ENCODE measurements at regions of chr4 and their contacts with region 1.

Region 1: GRCh38 chr4:99847362-99847976 is 30.8 kb downstream of the DAPP1 start:
- DNase-seq: no peak
- H3K4me3 Mint-ChIP-seq: peak overlapping the region; percentile 59
- H3K27ac Mint-ChIP-seq: peak overlapping the region; percentile 95
- H3K4me1 Mint-ChIP-seq: peaks cover 83% of the 10 kb centered on the region
- H3K27me3 Mint-ChIP-seq: no peaks in the 10 kb centered on the region

Region 2: DNA sequence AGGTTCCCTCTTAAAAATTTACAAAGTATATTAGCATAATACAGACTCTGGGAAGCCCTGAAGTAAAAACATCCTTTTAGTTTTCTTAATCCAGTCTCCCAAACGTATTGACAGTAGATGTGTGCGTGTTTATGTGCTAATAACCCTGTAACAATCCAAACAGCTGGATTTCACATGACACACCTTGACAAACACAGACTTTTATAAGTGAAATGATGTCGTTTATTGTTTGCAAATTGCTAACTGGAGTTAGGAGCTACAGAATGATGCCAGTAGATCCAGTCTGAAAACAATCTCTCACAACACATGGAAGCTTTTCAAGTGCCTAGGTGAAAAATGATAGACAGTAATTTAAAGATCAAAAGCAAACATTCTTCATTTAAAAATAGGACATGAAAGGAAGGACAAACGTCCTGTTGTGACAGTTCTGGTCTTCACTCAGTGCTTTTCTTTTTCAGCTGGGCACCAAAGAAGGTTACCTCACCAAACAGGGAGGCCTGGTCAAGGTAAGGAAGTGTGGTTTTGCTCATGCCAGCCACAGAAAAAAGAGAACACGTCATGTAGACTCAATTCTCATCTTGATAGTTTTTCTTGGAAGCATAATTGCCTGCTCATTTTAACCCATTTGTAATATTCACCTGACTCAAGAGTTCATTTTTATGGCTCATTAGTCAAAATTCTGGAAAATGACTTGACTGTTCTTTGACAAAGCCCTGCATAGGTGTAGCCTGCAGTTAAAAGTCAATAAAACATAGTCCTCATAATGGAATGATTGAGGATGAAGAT is 13.8 kb after region 1 on chr4:
- intact Hi-C with region 1: loop called (anchors 1 kb)
- DNase-seq: no peak
- H3K4me3 Mint-ChIP-seq: peak overlapping the region; percentile 2
- H3K27ac Mint-ChIP-seq: peak overlapping the region; percentile 75
- H3K4me1 Mint-ChIP-seq: peaks cover 59% of the 10 kb centered on the region
- H3K27me3 Mint-ChIP-seq: no peaks in the 10 kb centered on the region

Region 3: DNA sequence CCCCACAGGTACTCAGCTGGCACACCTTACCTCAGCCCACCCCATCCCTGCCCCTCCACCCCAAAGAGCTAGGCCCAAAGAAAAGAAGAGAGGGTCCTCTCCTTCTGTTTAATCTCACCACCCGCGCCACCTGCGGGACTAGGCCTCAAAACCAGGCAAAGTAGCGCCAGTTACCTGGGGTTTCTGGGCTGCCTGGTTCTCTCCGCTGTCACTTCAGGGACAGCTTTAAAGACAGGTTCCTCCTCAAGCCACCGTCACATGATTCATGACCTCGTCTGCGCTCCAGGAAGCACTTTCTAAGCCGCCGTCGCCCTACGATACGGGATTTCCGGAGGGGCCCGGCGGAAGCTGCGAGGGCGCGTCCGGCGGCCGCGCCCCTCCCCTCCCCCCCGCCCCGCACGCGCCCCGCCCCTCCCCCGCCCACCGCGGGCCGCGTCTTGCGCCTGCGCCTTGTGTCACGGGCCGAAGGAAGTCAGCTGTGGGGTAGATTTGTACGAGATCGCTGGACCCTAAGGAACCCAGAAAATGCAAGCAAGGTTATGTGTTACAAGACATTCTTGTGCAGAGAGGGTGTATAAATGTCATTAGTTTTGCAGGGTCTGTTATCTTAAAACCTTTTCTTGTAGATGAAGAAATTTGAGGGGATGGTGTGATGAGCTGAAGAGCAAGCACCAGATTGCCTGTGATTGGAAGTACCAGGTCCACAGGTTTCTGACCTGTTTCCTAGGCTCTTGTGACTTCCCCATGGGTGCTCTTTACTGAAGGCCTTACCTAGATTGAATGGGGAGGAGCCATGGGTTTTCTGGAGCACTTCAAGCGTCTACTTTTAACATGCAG is 46.9 kb after region 1 on chr4 and contains the start of gene LAMTOR3:
- intact Hi-C with region 1: loop called (anchors 2 kb)
- DNase-seq: peak; percentile 87
- H3K4me3 Mint-ChIP-seq: peak within 1 kb of the TSS; percentile 97
- H3K27ac Mint-ChIP-seq: peak within 1 kb of the TSS; percentile 95
- H3K4me1 Mint-ChIP-seq: peaks cover 42% of the 10 kb centered on the region
- H3K27me3 Mint-ChIP-seq: no peaks in the 10 kb centered on the region
- total RNA-seq, gene LAMTOR3: 28.6 and 29.7 TPM in 2 replicates

Measured in activated T-helper 1 cell treated with anti-CD3 and anti-CD28 coated beads, Interleukin-12 subunit alpha, Interleukin-12 subunit beta, Interleukin-2, Interleukin-4 antibody, amounts not matched to agents 30 ng/mL and 10 ng/mL and 1 ng/mL, durations not matched to agents 14 hours and 24 hours and 36 hours (primary cell).